PC-3 (cell line): ENCODE measurements at regions of chr22 and their contacts with region 1.

Region 1: GRCh38 chr22:42283278-42284201 is 13.1 kb upstream of the TCF20 start:
- DNase-seq: no peak
- ATAC-seq: no peak
- H3K4me3 ChIP-seq: no peak overlapping the region
- H3K27ac ChIP-seq: no peak overlapping the region
- H3K4me1 ChIP-seq: no peaks in the 10 kb centered on the region
- H3K27me3 ChIP-seq: no peaks in the 10 kb centered on the region
- CTCF ChIP-seq: no peak

Region 2: GRCh38 chr22:42258126-42258525 is 25.4 kb before region 1 on chr22:
- CTCF ChIA-PET with region 1: no interaction called
- POLR2A ChIA-PET with region 1: no interaction called
- intact Hi-C with region 1: no loop called
- DNase-seq: no peak
- ATAC-seq: no peak
- H3K4me3 ChIP-seq: no peak overlapping the region
- H3K27ac ChIP-seq: no peak overlapping the region
- H3K4me1 ChIP-seq: no peaks in the 10 kb centered on the region
- H3K27me3 ChIP-seq: no peaks in the 10 kb centered on the region
- CTCF ChIP-seq: no peak

Region 3: DNA sequence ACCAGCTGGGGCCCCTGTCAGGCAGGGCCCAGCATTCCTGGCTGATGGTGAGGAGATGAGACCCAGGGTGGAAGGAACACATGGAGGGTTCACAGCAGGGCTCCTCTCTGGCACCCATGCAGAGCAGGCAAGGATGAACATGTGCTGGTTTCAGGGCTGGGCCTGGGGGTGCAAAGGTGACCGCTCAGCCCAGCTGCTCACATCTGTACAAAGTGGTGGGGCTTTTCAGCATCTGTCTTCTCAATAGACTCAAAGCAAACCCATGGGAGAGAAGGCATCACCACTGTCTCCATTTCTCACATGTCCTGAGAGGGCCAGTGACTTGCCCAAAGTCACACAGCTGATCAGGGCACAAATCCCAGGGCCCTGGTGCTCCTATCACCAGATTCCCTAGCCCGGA is 14.2 kb after region 1 on chr22:
- CTCF ChIA-PET with region 1: interaction called, 13 read pairs
- POLR2A ChIA-PET with region 1: no interaction called
- intact Hi-C with region 1: no loop called
- DNase-seq: no peak
- ATAC-seq: no peak
- H3K4me3 ChIP-seq: no peak overlapping the region
- H3K27ac ChIP-seq: no peak overlapping the region
- H3K4me1 ChIP-seq: no peaks in the 10 kb centered on the region
- H3K27me3 ChIP-seq: no peaks in the 10 kb centered on the region
- CTCF ChIP-seq: no peak